Uterus (tissue), 4 donors: ENCODE measurements at regions of chr19 and their contacts with region 1.

Region 1: DNA sequence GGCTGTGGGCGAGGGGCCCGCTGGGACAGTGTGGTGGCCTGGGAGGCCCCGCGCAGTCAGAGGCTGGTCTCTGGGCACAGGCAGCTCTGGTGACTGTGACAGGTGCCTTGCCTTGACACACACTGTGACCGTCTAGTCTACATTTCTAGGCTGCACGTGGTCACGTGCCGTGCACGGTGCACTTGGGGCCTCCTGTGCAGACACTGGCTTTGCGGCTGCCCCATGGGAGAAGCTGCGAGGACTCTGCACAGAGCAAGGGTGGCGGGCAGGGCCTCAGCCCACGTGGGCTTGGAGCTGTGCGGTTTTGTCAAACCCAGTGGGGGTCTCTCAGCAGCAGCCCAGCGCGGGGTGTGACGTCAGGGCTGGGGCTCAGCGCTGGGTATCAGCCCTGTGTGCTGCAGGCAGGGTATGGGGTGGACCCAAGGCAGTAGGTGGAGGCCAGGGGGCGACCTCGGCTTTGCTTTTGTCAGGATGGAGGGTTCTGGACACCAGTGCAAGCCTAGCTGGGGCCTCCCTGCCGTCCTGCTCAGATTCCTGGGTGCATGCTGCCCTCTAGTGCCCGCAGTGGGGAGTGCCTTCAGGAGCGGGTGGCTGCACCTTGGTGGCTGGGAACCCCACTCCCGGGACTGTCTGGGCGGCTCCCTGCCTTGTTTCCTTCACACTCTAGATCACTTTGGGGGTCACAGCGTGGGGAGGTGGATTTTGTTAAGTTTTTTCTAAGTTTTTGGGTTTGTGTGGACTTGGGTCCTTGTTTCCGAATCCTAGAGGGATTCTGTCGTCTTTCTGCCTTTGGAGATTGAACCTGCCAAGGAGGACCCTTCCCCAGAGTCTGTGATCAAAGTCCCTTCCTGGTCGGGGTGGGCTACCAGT is 62.6 kb downstream of the KDM4B start:
- DNase-seq: peak; percentile 84 to 89
- H3K4me3 ChIP-seq: no peak overlapping the region
- H3K27ac ChIP-seq: peak overlapping the region in 1 of 2 donors; percentile 21
- H3K4me1 ChIP-seq: peaks cover 0 to 12% of the 10 kb centered on the region in 2 donors
- H3K27me3 ChIP-seq: no peaks in the 10 kb centered on the region
- CTCF ChIP-seq: peak; percentile 89 to 97 (median 96)
- POLR2A ChIP-seq: no peak

Region 2: DNA sequence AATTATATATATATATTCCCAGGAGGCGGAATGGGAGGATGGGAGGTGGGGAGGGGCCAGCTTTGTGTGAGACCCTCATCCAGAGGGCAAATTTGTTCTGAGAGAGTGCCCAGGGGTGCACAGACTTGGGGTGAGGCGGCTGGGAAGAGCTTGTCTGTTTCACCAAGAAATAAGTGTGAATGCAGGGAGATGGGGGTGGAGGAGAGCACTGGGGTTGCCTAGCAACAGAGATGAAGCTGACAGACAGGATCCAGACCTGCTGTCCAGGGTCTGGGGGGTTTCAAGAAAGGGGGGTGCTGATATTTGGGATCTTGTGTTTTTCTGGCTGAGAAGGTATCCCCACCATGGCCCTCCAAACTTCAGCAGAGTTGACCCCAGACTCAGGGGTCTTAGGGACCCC is 410.8 kb before region 1 on chr19:
- intact Hi-C with region 1: no loop called
- DNase-seq: no peak
- H3K4me3 ChIP-seq: no peak overlapping the region
- H3K27ac ChIP-seq: no peak overlapping the region
- H3K4me1 ChIP-seq: no peaks in the 10 kb centered on the region
- H3K27me3 ChIP-seq: peaks cover 0 to 5% of the 10 kb centered on the region in 2 donors
- CTCF ChIP-seq: no peak
- POLR2A ChIP-seq: no peak

Region 3: DNA sequence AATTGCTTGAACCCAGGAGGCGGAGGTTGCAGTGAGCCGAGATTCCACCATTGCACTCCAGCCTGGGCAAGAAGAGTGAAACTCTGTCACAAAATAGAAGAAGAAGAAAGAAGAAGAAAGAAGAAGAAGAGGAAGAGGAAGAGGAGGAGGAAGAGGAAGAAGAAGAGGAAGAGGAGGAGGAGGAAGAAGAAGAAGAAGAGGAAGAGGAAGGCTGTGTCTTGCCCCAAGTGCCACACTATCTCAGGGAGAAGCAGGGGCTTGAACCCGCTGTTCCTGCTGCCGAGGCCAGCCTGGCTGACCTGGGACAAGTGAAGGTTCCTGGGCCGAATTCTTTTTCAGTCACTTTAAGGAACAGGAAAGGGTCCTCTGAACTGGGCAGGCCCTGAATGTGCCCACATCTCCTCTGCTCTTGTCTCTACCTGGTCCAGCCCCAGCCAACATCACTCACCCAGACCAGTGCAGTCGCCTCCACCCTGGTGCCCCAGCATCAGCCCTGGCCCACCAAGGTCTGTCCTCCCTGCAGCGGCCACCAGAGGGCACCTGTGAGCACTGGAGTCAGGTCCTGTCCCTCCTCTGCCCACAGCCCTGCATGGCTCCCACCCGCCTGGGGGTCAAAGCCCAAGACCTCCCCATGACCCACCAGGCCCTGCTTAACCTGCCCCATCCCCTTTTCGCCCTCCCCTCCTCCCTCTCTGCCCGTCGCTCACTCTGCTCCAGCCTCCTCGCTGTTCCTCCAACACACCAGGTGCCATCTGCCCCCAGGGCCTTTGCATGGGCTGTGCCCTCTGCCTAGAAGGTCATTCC is 219.9 kb before region 1 on chr19:
- intact Hi-C with region 1: loop called (anchors 5 kb)
- DNase-seq: peak; percentile 78
- H3K4me3 ChIP-seq: no peak overlapping the region
- H3K27ac ChIP-seq: peak overlapping the region; percentile 90 to 94
- H3K4me1 ChIP-seq: no peaks in the 10 kb centered on the region
- H3K27me3 ChIP-seq: no peaks in the 10 kb centered on the region
- CTCF ChIP-seq: peak; percentile 70 to 87 (median 77)
- POLR2A ChIP-seq: no peak

Region 4: DNA sequence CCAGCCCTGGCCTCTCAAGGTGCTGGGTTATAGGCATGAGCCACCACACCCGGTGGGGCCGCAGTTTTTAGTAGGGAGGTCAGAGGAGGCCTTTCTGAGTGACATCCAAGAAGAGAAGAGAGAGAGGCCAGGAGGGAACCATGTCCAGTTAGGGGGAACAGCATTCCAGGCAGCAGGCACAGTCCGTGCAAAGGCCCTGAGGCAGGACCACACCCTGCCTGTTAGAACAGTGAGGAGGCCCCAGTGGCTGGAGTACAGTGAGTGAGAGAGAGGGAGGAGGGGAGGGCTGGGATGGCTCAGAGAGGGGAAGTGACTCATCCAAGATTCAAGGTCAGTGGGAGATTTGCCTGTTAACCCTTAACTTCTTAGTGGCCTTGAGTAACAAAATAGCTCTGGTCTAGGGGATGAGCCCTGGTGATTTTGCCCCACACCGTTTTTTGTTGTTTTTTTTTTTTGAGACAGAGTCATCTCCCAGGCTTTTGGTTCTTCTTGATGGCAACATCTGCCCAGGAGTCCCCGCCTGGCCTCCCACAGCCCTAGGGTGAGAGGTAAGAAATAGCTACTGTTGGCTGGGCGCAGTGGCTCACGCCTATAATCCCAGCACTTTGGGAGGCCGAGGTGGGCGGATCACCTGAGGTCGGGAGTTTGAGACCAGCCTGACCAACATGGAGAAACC is 161.3 kb before region 1 on chr19:
- intact Hi-C with region 1: loop called (anchors 2 kb)
- DNase-seq: peak in 1 of 2 donors; percentile 24
- H3K4me3 ChIP-seq: no peak overlapping the region
- H3K27ac ChIP-seq: no peak overlapping the region
- H3K4me1 ChIP-seq: no peaks in the 10 kb centered on the region
- H3K27me3 ChIP-seq: no peaks in the 10 kb centered on the region
- CTCF ChIP-seq: no peak
- POLR2A ChIP-seq: no peak